MCF 10A (cell line): ENCODE measurements at regions of chr19 and their contacts with region 1.

Region 1: DNA sequence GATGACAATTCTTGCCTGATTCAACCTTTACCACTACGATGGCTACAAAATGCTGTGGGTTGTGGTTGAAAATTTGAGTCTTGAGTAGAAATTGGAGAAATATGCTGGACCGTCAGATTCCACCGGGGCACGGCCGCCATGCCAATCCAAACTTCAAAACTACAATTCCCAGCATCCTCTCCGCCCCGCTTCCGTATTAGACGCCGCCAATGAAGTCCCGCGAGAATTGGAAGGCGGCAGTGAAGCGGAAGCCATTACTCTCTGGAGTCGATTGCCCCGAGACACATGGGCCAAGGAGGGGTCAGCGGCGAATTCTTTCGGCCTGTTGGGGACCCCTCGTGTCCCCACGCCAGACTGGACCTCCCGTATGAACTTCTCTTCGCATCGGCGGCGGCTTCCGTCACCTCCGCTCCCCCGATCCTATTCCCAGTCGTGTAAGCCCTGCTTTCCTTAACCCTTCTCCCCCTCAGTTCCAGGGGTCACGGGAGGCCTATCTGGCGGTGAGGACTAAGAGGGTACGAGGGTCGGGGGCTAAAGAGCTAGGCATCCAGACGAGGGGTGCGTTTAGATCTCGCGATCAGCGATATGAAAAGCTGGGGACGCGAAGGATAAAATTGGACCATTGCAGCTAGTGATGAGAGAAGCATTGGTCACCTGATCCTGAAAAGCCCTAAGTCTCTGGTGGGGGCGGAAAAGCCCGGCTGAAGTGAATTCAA is at the start of gene ZNF317:
- DNase-seq: peak; percentile 95
- H3K4me3 Mint-ChIP-seq: peak within 1 kb of the TSS; percentile 99
- H3K27ac Mint-ChIP-seq: peak within 1 kb of the TSS; percentile 97
- H3K4me1 Mint-ChIP-seq: no peaks in the 10 kb centered on the region
- H3K27me3 Mint-ChIP-seq: no peaks in the 10 kb centered on the region
- CTCF ChIP-seq: no peak
- total RNA-seq, gene ZNF317: 33.9 and 36.6 TPM in 2 replicates

Region 2: DNA sequence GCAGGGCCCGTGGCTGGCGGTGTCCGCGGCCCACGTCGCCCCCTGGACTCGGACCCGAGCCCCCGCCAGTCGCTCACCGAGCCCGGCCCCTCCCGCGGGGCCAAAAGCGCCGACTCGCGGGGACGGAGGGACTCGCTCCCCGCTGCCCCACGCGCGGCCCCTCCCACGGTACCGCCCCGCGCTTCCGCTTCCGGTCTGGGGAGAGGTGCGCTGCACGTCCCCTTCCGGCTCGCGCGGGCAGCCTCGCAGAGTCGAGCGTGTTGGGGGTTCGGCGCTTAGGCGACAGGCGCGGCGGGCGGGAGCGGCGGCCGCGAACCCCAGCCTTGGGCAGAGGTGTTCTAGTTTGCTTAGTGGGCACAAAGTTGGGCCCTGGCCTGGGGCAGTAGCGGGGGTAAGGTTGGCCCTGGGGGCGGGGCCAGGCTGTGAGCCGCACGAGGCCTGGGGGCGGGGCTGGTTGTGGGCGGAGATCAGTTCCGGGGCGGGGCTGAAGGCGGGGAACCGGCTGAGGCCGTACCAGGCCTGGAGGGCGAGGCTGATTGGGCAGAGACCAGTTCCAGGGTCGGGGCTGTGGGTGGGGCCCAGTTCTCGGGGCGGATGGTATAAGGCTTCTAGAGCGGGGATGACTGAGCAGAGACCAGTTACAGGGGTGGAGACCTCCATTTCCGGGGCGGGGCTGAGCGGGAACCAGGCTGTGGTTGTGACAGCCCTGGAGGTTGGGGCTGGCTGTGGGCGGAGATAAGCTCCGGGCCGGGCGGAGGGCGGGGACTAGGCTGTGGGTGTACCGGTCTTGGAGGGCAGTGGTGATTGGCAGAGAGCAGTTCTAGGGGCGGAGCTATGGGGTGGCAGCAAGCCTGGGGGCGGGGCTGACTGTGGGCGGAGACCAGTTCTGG is 307.9 kb before region 1 on chr19 and contains the starts of genes MBD3L1 and ZNF558:
- CTCF ChIA-PET with region 1: no interaction called
- POLR2A ChIA-PET with region 1: interaction called, 3 read pairs
- intact Hi-C with region 1: loop called (anchors 5 kb)
- DNase-seq: peak; percentile 98
- H3K4me3 Mint-ChIP-seq: peak within 1 kb of the TSS; percentile 82
- H3K27ac Mint-ChIP-seq: peak within 1 kb of the TSS; percentile 97
- H3K4me1 Mint-ChIP-seq: peaks cover 5% of the 10 kb centered on the region
- H3K27me3 Mint-ChIP-seq: no peaks in the 10 kb centered on the region
- CTCF ChIP-seq: no peak
- total RNA-seq, gene MBD3L1: not detected in 2 replicates
- total RNA-seq, gene ZNF558: 34.1 and 36.5 TPM in 2 replicates

Region 3: GRCh38 chr19:9151367-9151766 is 11.1 kb after region 1 on chr19:
- CTCF ChIA-PET with region 1: no interaction called
- POLR2A ChIA-PET with region 1: no interaction called
- intact Hi-C with region 1: no loop called
- DNase-seq: no peak
- H3K4me3 Mint-ChIP-seq: no peak overlapping the region
- H3K27ac Mint-ChIP-seq: no peak overlapping the region
- H3K4me1 Mint-ChIP-seq: peaks cover 21% of the 10 kb centered on the region
- H3K27me3 Mint-ChIP-seq: no peaks in the 10 kb centered on the region
- CTCF ChIP-seq: no peak

Region 4: DNA sequence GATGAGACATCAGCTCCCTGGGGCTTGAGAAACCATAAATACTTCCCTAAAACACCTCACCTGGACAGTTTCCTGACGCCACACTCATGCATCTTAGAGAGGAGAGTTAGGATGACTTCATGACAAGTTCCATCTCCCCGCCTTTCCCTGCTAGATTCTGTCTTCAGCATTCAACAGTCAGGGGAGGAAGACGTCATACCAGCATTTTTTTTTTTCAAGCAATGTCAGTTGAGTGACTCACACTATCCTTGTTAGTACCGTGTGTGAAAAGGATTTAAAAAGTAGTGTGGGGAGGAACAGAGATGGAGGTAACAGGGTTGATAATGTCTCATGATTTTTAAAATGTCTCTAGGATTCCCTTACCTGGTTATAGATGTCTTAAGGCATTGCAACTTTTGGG is 38.6 kb after region 1 on chr19 and contains the start of gene OR7D2:
- CTCF ChIA-PET with region 1: no interaction called
- POLR2A ChIA-PET with region 1: no interaction called
- intact Hi-C with region 1: no loop called
- DNase-seq: no peak
- H3K4me3 Mint-ChIP-seq: no peak within 1 kb of the TSS
- H3K27ac Mint-ChIP-seq: no peak within 1 kb of the TSS
- H3K4me1 Mint-ChIP-seq: no peaks in the 10 kb centered on the region
- H3K27me3 Mint-ChIP-seq: no peaks in the 10 kb centered on the region
- CTCF ChIP-seq: no peak
- total RNA-seq, gene OR7D2: not detected in 2 replicates

Region 5: GRCh38 chr19:9309139-9309973 is 169.0 kb after region 1 on chr19 and contains the start of gene ZNF699:
- CTCF ChIA-PET with region 1: interaction called, 3 read pairs
- POLR2A ChIA-PET with region 1: no interaction called
- intact Hi-C with region 1: loop called (anchors 5 kb)
- DNase-seq: peak; percentile 99
- H3K4me3 Mint-ChIP-seq: peak within 1 kb of the TSS; percentile 92
- H3K27ac Mint-ChIP-seq: peak within 1 kb of the TSS; percentile 81
- H3K4me1 Mint-ChIP-seq: peaks cover 6% of the 10 kb centered on the region
- H3K27me3 Mint-ChIP-seq: no peaks in the 10 kb centered on the region
- CTCF ChIP-seq: no peak
- total RNA-seq, gene ZNF699: 6.4 and 6.7 TPM in 2 replicates

Region 6: DNA sequence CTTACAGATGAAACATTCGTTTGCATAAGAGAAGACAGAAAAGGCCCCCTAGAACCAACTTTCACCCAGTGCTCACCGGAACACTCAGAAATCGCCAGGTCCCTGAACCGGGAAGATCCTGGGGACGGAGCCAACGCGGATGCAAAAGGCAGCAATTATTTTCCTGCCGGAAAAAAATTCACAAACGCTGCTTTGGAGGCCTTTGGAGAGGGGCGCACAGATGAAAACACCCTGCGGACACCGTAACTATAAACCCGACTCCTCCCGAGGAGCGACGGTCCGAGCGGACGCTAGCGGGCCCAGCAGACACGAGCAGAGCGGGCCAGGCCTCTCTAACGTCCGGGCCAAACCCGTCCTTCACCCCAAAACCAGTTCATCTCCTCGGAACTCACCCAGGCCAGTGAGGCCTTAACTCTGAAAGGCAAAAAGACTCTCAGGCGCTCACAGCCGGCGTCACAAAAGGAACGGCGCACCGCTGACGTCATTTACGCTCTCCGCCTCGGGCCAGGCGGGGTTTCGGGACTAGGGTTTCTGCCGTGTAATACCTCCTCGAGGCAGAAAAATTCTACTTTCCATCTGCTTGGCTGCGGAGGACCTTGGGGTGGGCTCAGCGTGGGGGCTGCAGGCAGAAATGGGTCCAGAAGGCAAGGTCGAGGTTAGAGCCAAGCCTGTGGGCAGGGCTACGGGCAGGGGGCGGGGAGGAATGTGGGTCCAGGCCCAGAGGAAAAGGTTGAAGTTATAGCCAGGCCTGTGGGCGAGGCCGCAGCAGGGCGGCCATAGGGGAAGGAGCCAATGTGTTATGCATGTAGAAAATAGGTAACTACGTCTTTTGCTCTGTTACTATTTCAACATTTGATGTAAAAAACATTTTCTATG is 398.1 kb after region 1 on chr19 and contains the start of gene ZNF426:
- CTCF ChIA-PET with region 1: no interaction called
- POLR2A ChIA-PET with region 1: no interaction called
- intact Hi-C with region 1: loop called (anchors 1 kb)
- DNase-seq: peak; percentile 72
- H3K4me3 Mint-ChIP-seq: peak within 1 kb of the TSS; percentile 94
- H3K27ac Mint-ChIP-seq: peak within 1 kb of the TSS; percentile 100
- H3K4me1 Mint-ChIP-seq: peaks cover 7% of the 10 kb centered on the region
- H3K27me3 Mint-ChIP-seq: no peaks in the 10 kb centered on the region
- CTCF ChIP-seq: no peak
- total RNA-seq, gene ZNF426: 8.1 and 13.2 TPM in 2 replicates

Region 7: DNA sequence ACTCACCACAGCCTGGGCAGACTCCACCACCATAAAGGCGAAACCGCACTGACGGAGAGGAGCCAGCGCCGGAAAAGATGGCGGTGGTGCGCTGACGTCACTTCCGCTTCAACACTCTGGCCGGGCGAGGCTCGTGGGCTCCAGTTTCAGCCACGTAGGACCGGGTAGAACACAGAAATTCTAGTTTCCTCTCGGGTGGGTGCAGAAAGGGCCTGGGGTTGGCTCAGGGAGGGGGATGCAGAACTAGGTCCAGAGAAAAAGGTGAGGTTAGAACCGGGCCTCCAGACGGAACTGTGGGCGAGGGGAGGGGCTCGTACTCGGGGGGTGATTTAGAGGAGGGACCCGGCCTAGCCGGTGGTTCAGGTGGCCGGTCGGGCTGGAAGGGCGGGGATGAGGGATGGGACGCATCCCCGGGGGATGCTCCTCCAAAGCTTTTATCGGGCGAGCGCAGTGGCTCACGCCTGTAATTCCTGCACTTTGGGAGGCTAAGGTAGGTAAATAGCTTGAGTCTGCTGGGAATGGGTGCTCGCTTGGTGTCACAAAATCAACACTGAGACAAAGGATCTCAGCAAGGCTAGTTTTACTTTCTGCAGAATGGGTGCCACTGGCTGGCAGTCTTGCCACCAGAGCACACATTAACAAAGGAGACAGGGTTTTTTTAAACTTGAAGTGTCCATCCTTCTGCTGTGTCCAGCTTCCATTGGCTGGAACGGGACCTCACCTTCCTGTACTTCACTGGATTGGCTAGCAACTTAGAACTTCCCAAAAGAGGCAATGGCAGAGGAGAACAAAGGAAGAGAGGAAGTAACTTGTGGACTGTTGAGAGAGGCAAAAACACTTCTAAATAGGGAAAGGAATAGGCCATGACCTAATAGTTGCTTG is 481.1 kb after region 1 on chr19 and contains the start of gene ZNF561:
- CTCF ChIA-PET with region 1: interaction called, 3 read pairs
- POLR2A ChIA-PET with region 1: interaction called, 8 read pairs
- intact Hi-C with region 1: loop called (anchors 1 kb)
- DNase-seq: peak; percentile 75
- H3K4me3 Mint-ChIP-seq: peak within 1 kb of the TSS; percentile 91
- H3K27ac Mint-ChIP-seq: peak within 1 kb of the TSS; percentile 99
- H3K4me1 Mint-ChIP-seq: peaks cover 20% of the 10 kb centered on the region
- H3K27me3 Mint-ChIP-seq: no peaks in the 10 kb centered on the region
- CTCF ChIP-seq: no peak
- total RNA-seq, gene ZNF561: 37.0 and 37.7 TPM in 2 replicates

Region 8: DNA sequence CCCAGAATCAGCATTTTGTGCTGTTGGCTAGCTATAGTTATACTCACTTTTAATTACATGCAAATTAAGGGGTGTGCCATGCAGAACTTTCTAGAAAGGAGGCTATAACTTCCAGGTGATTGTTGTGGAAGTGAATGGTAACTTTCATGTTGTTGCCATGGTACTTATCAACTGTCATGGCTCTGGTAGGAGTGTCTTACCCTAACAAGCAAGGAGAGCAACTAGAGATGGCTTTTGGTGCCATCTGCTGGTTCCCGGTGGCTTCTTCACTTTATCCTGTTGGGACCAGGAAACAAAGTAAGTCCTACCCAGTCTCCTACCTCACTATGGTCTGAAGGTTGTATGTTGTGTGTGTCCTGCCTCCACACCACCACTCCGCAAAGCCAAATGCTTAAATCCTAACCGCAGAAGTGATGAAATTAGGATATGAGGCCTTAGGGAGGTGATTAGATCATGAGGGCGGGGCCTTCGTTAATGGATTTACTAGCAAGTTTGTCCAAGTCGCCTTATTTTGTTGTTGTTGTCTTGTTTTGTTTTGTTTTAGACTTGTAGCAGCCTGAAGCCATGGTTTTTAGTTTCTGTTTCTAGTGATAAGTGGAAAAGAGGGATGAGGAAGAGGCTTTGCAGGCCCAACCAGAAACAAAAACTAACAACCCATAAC is 655.9 kb after region 1 on chr19:
- CTCF ChIA-PET with region 1: interaction called, 3 read pairs
- POLR2A ChIA-PET with region 1: no interaction called
- intact Hi-C with region 1: loop called (anchors 1 kb)
- DNase-seq: peak; percentile 94
- H3K4me3 Mint-ChIP-seq: no peak overlapping the region
- H3K27ac Mint-ChIP-seq: peak overlapping the region; percentile 59
- H3K4me1 Mint-ChIP-seq: peaks cover 6% of the 10 kb centered on the region
- H3K27me3 Mint-ChIP-seq: no peaks in the 10 kb centered on the region
- CTCF ChIP-seq: peak; percentile 67

Region 9: DNA sequence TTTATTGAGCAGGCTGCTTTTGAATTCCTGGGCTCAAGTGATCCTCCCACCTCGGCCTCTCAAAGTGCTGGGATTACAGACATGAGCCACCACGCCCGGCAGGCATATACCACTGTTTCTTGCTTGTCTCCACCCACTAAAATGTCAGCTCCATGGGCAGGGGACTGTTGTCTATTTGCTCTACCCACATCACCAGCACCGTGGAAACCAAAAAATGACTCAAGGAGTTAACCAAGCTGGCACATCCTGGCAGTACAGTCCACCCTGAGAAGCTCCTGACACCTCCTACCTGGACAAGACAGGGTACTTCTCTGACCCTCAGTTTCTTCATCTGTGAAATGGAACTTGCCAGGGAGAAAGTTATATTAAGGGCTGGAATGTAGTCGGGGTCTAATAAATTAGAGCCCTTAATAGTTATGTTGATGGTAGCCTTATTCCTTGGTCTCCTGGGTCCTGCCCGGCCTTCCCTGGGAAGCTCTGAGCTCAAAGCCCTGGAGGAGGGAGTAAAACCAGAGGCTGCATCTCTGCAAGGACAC is 886.9 kb after region 1 on chr19:
- CTCF ChIA-PET with region 1: interaction called, 3 read pairs
- POLR2A ChIA-PET with region 1: no interaction called
- intact Hi-C with region 1: loop called (anchors 5 kb)
- DNase-seq: peak; percentile 15
- H3K4me3 Mint-ChIP-seq: no peak overlapping the region
- H3K27ac Mint-ChIP-seq: no peak overlapping the region
- H3K4me1 Mint-ChIP-seq: no peaks in the 10 kb centered on the region
- H3K27me3 Mint-ChIP-seq: peaks cover 16% of the 10 kb centered on the region
- CTCF ChIP-seq: no peak